Naive thymus-derived CD4-positive, alpha-beta T cell (primary cell): ENCODE measurements at regions of chr18 and their contacts with region 1.

Region 1: GRCh38 chr18:80157708-80158343 is 48.8 kb downstream of the ADNP2 start:
- DNase-seq: peak in 8 of 9 donors; percentile 39 to 68 (median 54)
- ATAC-seq: peak; percentile 75
- H3K4me3 ChIP-seq: no peak overlapping the region
- H3K4me3 Mint-ChIP-seq: no peak overlapping the region
- H3K27ac ChIP-seq: no peak overlapping the region
- H3K27ac Mint-ChIP-seq: no peak overlapping the region
- H3K4me1 ChIP-seq: no peaks in the 10 kb centered on the region
- H3K4me1 Mint-ChIP-seq: peaks cover 0 to 4% (median 0%) of the 10 kb centered on the region in 7 donors
- H3K27me3 ChIP-seq: no peaks in the 10 kb centered on the region
- H3K27me3 Mint-ChIP-seq: peaks cover 0 to 31% (median 18%) of the 10 kb centered on the region in 5 donors

Region 2: GRCh38 chr18:79378542-79379250 is 779.1 kb before region 1 on chr18:
- CTCF ChIA-PET with region 1: no interaction called
- POLR2A ChIA-PET with region 1: no interaction called
- intact Hi-C with region 1: loop called in 1 of 2 experiments (anchors 10 kb)
- DNase-seq: peak; percentile 67 to 87 (median 78)
- ATAC-seq: peak; percentile 95
- H3K4me3 ChIP-seq: no peak overlapping the region
- H3K4me3 Mint-ChIP-seq: peak overlapping the region in 2 of 10 donors; percentile 11 to 50
- H3K27ac ChIP-seq: no peak overlapping the region
- H3K27ac Mint-ChIP-seq: peak overlapping the region in 7 of 9 donors; percentile 18 to 77 (median 63)
- H3K4me1 ChIP-seq: peaks cover 6 to 7% of the 10 kb centered on the region in 2 donors
- H3K4me1 Mint-ChIP-seq: peaks cover 4 to 9% (median 9%) of the 10 kb centered on the region in 7 donors
- H3K27me3 ChIP-seq: no peaks in the 10 kb centered on the region
- H3K27me3 Mint-ChIP-seq: no peaks in the 10 kb centered on the region

Region 3: DNA sequence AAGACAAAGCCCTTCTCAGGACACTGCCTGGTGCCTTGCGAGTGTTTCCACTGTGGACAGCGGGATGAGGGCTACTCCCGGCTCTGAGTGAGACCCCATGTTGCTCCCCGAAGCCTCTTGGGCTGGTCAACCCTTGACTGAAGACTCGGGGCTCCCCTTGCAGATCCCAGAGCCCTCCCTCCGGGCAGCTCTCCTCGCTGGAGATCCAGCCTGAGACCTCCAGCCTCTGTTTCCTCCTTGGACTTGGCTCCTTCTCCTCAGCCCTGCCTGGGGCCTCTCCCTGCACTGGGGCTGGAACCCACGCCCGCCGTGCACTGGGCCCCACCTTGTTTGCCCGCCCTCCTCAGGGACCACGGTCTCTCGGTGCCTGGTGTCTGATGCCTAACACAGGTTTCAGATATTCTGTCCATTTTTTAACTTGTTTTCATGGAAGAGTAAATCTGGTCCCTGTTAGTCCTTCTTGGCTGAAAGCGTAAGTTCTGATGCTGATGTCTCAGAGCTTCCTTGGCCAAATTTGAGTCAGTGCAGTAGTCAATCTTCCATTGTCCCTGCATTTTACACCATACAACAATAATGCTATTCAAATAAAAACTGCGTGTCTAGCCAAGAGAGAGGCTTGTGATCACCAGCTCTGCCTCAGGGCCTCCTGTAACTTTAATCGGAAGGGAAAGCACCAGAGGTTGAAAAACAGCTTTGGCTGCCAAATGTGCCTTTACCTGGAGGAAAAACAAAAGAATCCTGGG is 617.5 kb before region 1 on chr18:
- CTCF ChIA-PET with region 1: no interaction called
- POLR2A ChIA-PET with region 1: no interaction called
- intact Hi-C with region 1: no loop called
- DNase-seq: no peak
- ATAC-seq: no peak
- H3K4me3 ChIP-seq: no peak overlapping the region
- H3K4me3 Mint-ChIP-seq: no peak overlapping the region
- H3K27ac ChIP-seq: no peak overlapping the region
- H3K27ac Mint-ChIP-seq: no peak overlapping the region
- H3K4me1 ChIP-seq: no peaks in the 10 kb centered on the region
- H3K4me1 Mint-ChIP-seq: no peaks in the 10 kb centered on the region
- H3K27me3 ChIP-seq: no peaks in the 10 kb centered on the region
- H3K27me3 Mint-ChIP-seq: no peaks in the 10 kb centered on the region

Region 4: GRCh38 chr18:80253871-80254492 is 96.2 kb after region 1 on chr18:
- CTCF ChIA-PET with region 1: interaction called, 5 read pairs
- POLR2A ChIA-PET with region 1: no interaction called
- intact Hi-C with region 1: loop called in 1 of 2 experiments (anchors 1 kb)
- DNase-seq: peak in 1 of 9 donors; percentile 37
- ATAC-seq: peak; percentile 86
- H3K4me3 ChIP-seq: no peak overlapping the region
- H3K4me3 Mint-ChIP-seq: no peak overlapping the region
- H3K27ac ChIP-seq: no peak overlapping the region
- H3K27ac Mint-ChIP-seq: no peak overlapping the region
- H3K4me1 ChIP-seq: peaks cover 0 to 3% of the 10 kb centered on the region in 2 donors
- H3K4me1 Mint-ChIP-seq: peaks cover 0 to 5% (median 0%) of the 10 kb centered on the region in 7 donors
- H3K27me3 ChIP-seq: no peaks in the 10 kb centered on the region
- H3K27me3 Mint-ChIP-seq: peaks cover 3 to 26% (median 15%) of the 10 kb centered on the region in 5 donors